ENCODE measurements at regions of chr19 and their contacts with region 1.

Region 1: DNA sequence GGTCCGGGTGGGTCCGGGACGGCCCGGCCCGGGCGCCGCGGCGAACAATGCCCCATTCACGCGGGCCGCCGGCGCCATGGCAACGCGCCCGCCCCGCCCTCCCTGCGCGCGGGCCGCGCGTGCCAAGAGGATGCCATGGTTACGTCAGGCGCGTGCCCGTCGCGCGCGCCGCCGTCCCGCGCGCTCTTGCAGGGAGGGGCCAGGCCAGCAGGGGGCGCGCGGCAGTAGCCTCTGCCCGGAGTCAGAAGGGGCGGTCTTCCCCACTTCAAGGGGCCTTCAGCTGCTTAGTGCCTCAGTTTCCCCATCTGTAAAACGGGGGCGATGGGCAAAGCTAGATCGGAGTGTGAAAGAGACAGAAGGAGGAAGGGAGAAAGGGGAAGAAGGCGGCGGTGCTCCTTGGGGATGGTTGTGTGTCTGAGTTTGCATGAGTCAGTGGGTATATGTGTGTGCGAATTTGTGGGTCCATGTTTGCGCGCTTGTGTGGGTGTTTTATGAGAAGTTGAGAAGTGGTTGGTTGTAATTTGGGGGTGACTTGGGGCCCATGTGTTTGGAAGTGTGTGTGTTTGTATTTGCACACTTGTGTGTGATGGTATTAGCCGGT is 11.6 kb upstream of the NFIX start:
- DNase-seq: peak; percentile 70
- ATAC-seq: peak; percentile 94
- H3K4me3 ChIP-seq: peak overlapping the region; percentile 42
- H3K27ac ChIP-seq: no peak overlapping the region
- H3K4me1 ChIP-seq: peaks cover 3% of the 10 kb centered on the region; the same call in 1 of the 2 replicates
- H3K27me3 ChIP-seq: no peaks in the 10 kb centered on the region
- CTCF ChIP-seq: peak; percentile 97
- POLR2A ChIP-seq: no peak
- RAD21 ChIP-seq: peak; percentile 88

Region 2: GRCh38 chr19:11279496-11280236 is 1704.0 kb before region 1 on chr19:
- CTCF ChIA-PET with region 1: no interaction called
- POLR2A ChIA-PET with region 1: no interaction called
- dilution Hi-C with region 1: no loop called
- in situ Hi-C with region 1: no loop called
- intact Hi-C with region 1: no loop called
- DNase-seq: no peak
- ATAC-seq: no peak
- H3K4me3 ChIP-seq: no peak overlapping the region
- H3K27ac ChIP-seq: no peak overlapping the region
- H3K4me1 ChIP-seq: no peaks in the 10 kb centered on the region
- H3K27me3 ChIP-seq: peaks cover 5% of the 10 kb centered on the region
- CTCF ChIP-seq: no peak
- POLR2A ChIP-seq: no peak
- RAD21 ChIP-seq: no peak

Region 3: DNA sequence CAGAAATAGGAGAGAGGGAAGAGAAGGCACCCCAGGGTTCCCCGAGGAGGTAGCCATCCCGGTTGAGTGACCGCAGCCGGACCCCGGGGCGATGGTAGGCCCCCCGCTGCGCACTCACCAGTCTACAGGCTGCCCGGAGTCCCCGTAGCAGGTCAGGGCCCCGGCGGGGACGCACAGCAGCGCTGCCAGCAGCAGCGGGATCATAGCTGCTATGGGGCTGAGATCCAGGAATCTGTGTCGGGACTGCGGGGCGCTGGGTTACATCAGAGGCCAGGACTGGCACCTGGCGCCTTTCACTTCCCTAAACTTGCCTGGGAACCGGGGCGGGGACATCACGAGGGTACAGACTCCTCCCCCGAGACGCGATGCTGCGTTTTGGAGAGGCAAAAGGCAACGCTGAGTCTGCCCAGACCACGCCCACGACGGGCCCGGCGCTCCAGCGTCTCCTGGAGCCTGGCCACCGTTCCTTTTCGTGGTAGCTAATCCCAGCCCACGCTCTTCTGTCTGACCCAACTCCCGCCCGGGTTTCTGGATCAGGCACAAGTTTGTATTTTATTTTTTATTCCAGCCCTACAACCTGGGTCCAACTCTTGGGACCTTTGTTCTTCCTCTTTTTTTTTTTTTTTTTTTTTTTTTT is 102.4 kb before region 1 on chr19 and contains the start of gene DNASE2:
- CTCF ChIA-PET with region 1: no interaction called
- POLR2A ChIA-PET with region 1: no interaction called
- dilution Hi-C with region 1: no loop called
- in situ Hi-C with region 1: no loop called
- intact Hi-C with region 1: no loop called
- DNase-seq: peak; percentile 87
- ATAC-seq: peak; percentile 96
- H3K4me3 ChIP-seq: peak within 1 kb of the TSS; percentile 61
- H3K27ac ChIP-seq: peak within 1 kb of the TSS; percentile 2; the same call in 1 of the 2 replicates
- H3K4me1 ChIP-seq: peaks cover 5% of the 10 kb centered on the region; the same call in 1 of the 2 replicates
- H3K27me3 ChIP-seq: peaks cover 22% of the 10 kb centered on the region
- CTCF ChIP-seq: no peak
- POLR2A ChIP-seq: no peak
- RAD21 ChIP-seq: no peak
- total RNA-seq, gene DNASE2: 6.4 and 9.5 TPM in 2 replicates

Region 4: DNA sequence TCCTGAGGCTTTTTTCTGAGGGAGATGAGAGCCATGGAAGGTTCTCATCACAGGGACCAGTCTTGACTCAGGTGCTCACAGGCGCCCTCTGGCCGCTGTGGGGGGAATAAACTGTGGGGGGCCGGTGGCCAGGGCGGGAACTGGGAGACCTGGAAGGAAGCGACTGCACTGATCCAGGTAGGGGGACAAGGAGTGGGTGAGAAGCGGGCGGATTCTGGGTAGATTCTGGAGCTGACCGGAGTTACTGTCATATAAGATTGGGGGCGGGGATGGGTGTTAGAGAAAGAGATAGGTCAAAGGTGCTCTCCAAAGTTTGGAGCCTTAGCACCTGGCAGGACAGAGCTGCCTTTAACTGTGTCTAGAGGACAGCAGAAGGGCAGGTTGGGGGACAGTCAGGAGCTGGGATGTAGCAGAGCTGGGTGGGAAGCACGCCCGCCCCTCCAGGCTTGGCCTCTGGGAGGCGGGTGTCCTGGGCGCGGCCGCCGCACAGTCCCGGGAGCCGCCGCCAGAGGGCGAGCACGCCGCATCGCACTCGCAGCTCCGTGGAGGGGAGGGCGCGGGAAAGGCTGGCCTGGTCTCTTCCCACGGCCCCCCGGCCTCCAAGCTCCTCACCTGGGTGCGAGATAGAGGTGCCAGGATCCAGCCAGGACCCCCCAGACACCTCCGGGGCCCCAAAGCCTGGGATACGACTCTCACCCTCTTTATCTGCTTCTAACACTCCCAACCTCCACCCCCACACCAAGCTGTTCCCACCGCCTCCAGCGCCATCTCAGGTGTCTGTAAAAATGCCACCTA is 18.4 kb before region 1 on chr19:
- CTCF ChIA-PET with region 1: interaction called, 12 read pairs
- POLR2A ChIA-PET with region 1: no interaction called
- dilution Hi-C with region 1: no loop called
- in situ Hi-C with region 1: no loop called
- intact Hi-C with region 1: no loop called
- DNase-seq: peak; percentile 58
- ATAC-seq: peak; percentile 100
- H3K4me3 ChIP-seq: peak overlapping the region; percentile 39
- H3K27ac ChIP-seq: peak overlapping the region; percentile 13; the same call in 1 of the 2 replicates
- H3K4me1 ChIP-seq: peaks cover 4% of the 10 kb centered on the region; the same call in 1 of the 2 replicates
- H3K27me3 ChIP-seq: no peaks in the 10 kb centered on the region; the same call in 1 of the 2 replicates
- CTCF ChIP-seq: peak; percentile 97
- POLR2A ChIP-seq: no peak
- RAD21 ChIP-seq: peak; percentile 58

Region 5: GRCh38 chr19:13060964-13061927 is 77.6 kb after region 1 on chr19:
- CTCF ChIA-PET with region 1: interaction called, 25 read pairs
- POLR2A ChIA-PET with region 1: interaction called, 3 read pairs
- dilution Hi-C with region 1: no loop called
- in situ Hi-C with region 1: no loop called
- intact Hi-C with region 1: loop called (anchors 1 kb)
- DNase-seq: peak; percentile 69
- ATAC-seq: peak; percentile 88
- H3K4me3 ChIP-seq: no peak overlapping the region
- H3K27ac ChIP-seq: peak overlapping the region; percentile 8
- H3K4me1 ChIP-seq: peaks cover 42% of the 10 kb centered on the region
- H3K27me3 ChIP-seq: no peaks in the 10 kb centered on the region
- CTCF ChIP-seq: peak; percentile 96
- POLR2A ChIP-seq: no peak
- RAD21 ChIP-seq: peak; percentile 98

Region 6: GRCh38 chr19:13150187-13150930 is 166.7 kb after region 1 on chr19 and contains the starts of genes IER2 and STX10:
- CTCF ChIA-PET with region 1: no interaction called
- POLR2A ChIA-PET with region 1: no interaction called
- dilution Hi-C with region 1: no loop called
- in situ Hi-C with region 1: no loop called
- intact Hi-C with region 1: loop called (anchors 2 kb)
- DNase-seq: peak; percentile 94
- ATAC-seq: peak; percentile 51
- H3K4me3 ChIP-seq: peak within 1 kb of the TSS; percentile 72
- H3K27ac ChIP-seq: peak within 1 kb of the TSS; percentile 97
- H3K4me1 ChIP-seq: peaks cover 8% of the 10 kb centered on the region
- H3K27me3 ChIP-seq: no peaks in the 10 kb centered on the region
- CTCF ChIP-seq: peak; percentile 64
- POLR2A ChIP-seq: peak; percentile 87
- RAD21 ChIP-seq: peak; percentile 43
- total RNA-seq, gene IER2: 7.7 and 17.5 TPM in 2 replicates
- total RNA-seq, gene STX10: 64.9 and 76.7 TPM in 2 replicates

Region 7: GRCh38 chr19:13731147-13731964 is 747.7 kb after region 1 on chr19:
- CTCF ChIA-PET with region 1: no interaction called
- POLR2A ChIA-PET with region 1: no interaction called
- dilution Hi-C with region 1: no loop called
- in situ Hi-C with region 1: loop called (anchors 25 kb)
- intact Hi-C with region 1: no loop called
- DNase-seq: peak; percentile 98
- ATAC-seq: peak; percentile 98
- H3K4me3 ChIP-seq: peak overlapping the region; percentile 52
- H3K27ac ChIP-seq: peak overlapping the region; percentile 87
- H3K4me1 ChIP-seq: peaks cover 10% of the 10 kb centered on the region
- H3K27me3 ChIP-seq: no peaks in the 10 kb centered on the region
- CTCF ChIP-seq: no peak
- POLR2A ChIP-seq: peak; percentile 62; the same call in 1 of the 2 replicates
- RAD21 ChIP-seq: no peak